ENCODE measurements at regions of chr1 and their contacts with region 1.

Region 1: GRCh38 chr1:202135221-202135721 is 9.3 kb downstream of the ARL8A start:
- DNase-seq: no peak
- H3K4me3 ChIP-seq: no peak overlapping the region
- H3K27ac ChIP-seq: peak overlapping the region; percentile 18 to 91 (median 51)
- H3K4me1 ChIP-seq: peaks cover 31 to 50% (median 42%) of the 10 kb centered on the region in 3 donors
- H3K27me3 ChIP-seq: no peaks in the 10 kb centered on the region
- CTCF ChIP-seq: peak; percentile 73 to 92 (median 82)
- POLR2A ChIP-seq: no peak

Region 2: GRCh38 chr1:202009326-202010179 is 125.7 kb before region 1 on chr1:
- intact Hi-C with region 1: loop called (anchors 5 kb)
- DNase-seq: no peak
- H3K4me3 ChIP-seq: peak overlapping the region; percentile 47 to 63 (median 60)
- H3K27ac ChIP-seq: peak overlapping the region; percentile 84 to 94 (median 90)
- H3K4me1 ChIP-seq: peaks cover 11 to 64% (median 12%) of the 10 kb centered on the region in 3 donors
- H3K27me3 ChIP-seq: no peaks in the 10 kb centered on the region
- CTCF ChIP-seq: peak; percentile 75 to 95 (median 91)
- POLR2A ChIP-seq: no peak

Region 3: GRCh38 chr1:202105539-202106276 is 29.6 kb before region 1 on chr1:
- intact Hi-C with region 1: no loop called
- DNase-seq: no peak
- H3K4me3 ChIP-seq: no peak overlapping the region
- H3K27ac ChIP-seq: peak overlapping the region; percentile 64 to 80 (median 69)
- H3K4me1 ChIP-seq: peaks cover 16 to 74% (median 25%) of the 10 kb centered on the region in 3 donors
- H3K27me3 ChIP-seq: no peaks in the 10 kb centered on the region
- CTCF ChIP-seq: no peak
- POLR2A ChIP-seq: no peak

Region 4: DNA sequence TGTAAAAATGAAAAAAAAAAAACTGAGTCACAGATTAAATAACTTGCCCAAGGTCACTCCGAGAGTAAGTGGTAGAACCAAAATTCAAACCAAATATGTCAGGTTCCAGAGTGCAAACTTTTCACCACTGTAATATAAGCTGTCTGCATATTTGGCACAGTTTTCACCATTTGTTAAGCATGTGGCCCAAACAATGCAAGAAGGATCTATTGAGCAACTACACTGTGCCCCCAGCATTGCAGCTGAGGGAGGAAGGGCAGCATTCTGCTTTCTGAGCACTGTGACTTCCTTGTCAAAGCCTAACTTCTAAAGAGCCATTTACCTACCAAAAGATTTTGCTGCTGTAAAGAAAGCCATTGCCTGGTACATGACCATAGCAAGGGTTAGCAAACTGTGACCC is 441.5 kb after region 1 on chr1:
- intact Hi-C with region 1: no loop called
- DNase-seq: no peak
- H3K4me3 ChIP-seq: no peak overlapping the region
- H3K27ac ChIP-seq: peak overlapping the region; percentile 64 to 83 (median 80)
- H3K4me1 ChIP-seq: peaks cover 24 to 85% (median 38%) of the 10 kb centered on the region in 3 donors
- H3K27me3 ChIP-seq: no peaks in the 10 kb centered on the region
- CTCF ChIP-seq: no peak
- POLR2A ChIP-seq: no peak

Measured in esophagus squamous epithelium (tissue), 5 donors.